IMR-90 (cell line): ENCODE measurements at regions of chr10 and their contacts with region 1.

Region 1: GRCh38 chr10:93376372-93377293 is 105.5 kb downstream of the MYOF start:
- DNase-seq: peak; percentile 90
- ATAC-seq: peak; percentile 77
- H3K4me3 ChIP-seq: no peak overlapping the region
- H3K27ac ChIP-seq: peak overlapping the region; percentile 86
- H3K4me1 ChIP-seq: peaks cover 14% of the 10 kb centered on the region
- H3K27me3 ChIP-seq: no peaks in the 10 kb centered on the region
- CTCF ChIP-seq: peak; percentile 94
- POLR2A ChIP-seq: peak; percentile 66; the same call in 1 of the 2 replicates
- RAD21 ChIP-seq: peak; percentile 97

Region 2: GRCh38 chr10:92848441-92849233 is 528.0 kb before region 1 on chr10 and contains the start of gene EXOC6:
- CTCF ChIA-PET with region 1: no interaction called
- POLR2A ChIA-PET with region 1: no interaction called
- dilution Hi-C with region 1: no loop called
- in situ Hi-C with region 1: no loop called
- intact Hi-C with region 1: no loop called
- DNase-seq: peak; percentile 74
- ATAC-seq: peak; percentile 87
- H3K4me3 ChIP-seq: peak within 1 kb of the TSS; percentile 94
- H3K27ac ChIP-seq: peak within 1 kb of the TSS; percentile 81
- H3K4me1 ChIP-seq: peaks cover 2% of the 10 kb centered on the region; the same call in 1 of the 2 replicates
- H3K27me3 ChIP-seq: no peaks in the 10 kb centered on the region
- CTCF ChIP-seq: no peak
- POLR2A ChIP-seq: peak; percentile 45; the same call in 1 of the 2 replicates
- RAD21 ChIP-seq: no peak
- total RNA-seq, gene EXOC6: 11.5 and 29.2 TPM in 2 replicates

Region 3: DNA sequence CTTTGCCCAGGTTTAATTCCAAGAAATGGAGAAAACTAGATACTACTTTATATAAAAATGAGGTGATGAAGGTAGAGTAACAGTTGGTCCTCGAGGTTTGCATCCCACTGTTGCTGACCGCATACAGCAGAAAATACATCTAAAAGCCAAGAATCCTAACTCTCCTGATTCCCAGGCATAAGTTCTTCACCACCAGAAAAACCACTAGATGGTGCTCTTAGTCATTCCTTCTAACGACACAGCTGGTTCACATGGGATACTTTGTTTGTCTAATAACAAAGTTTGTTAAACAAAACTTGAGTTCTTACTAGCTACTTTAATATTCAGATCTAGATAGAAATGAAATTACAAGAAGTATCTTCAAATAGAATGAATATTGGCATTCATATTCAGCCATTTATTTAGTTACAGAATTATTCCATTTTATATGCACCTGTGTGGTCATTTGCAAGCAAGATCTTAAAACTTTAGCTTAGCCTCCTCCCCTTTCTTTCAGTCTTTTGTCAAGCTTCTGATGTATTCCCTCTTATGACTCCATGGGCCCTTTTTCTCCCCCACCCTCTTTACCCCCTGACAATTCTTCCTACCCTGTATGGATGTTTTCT is 370.1 kb before region 1 on chr10:
- CTCF ChIA-PET with region 1: no interaction called
- POLR2A ChIA-PET with region 1: no interaction called
- dilution Hi-C with region 1: no loop called
- in situ Hi-C with region 1: no loop called
- intact Hi-C with region 1: no loop called
- DNase-seq: peak; percentile 75
- ATAC-seq: peak; percentile 85
- H3K4me3 ChIP-seq: no peak overlapping the region
- H3K27ac ChIP-seq: no peak overlapping the region
- H3K4me1 ChIP-seq: peaks cover 2% of the 10 kb centered on the region; the same call in 1 of the 2 replicates
- H3K27me3 ChIP-seq: no peaks in the 10 kb centered on the region
- CTCF ChIP-seq: peak; percentile 71
- POLR2A ChIP-seq: no peak
- RAD21 ChIP-seq: peak; percentile 76

Region 4: GRCh38 chr10:93352638-93353383 is 23.8 kb before region 1 on chr10:
- CTCF ChIA-PET with region 1: interaction called, 10 read pairs
- POLR2A ChIA-PET with region 1: no interaction called
- dilution Hi-C with region 1: no loop called
- in situ Hi-C with region 1: no loop called
- intact Hi-C with region 1: no loop called
- DNase-seq: peak; percentile 52
- ATAC-seq: peak; percentile 63
- H3K4me3 ChIP-seq: no peak overlapping the region
- H3K27ac ChIP-seq: no peak overlapping the region
- H3K4me1 ChIP-seq: 0 out of 2 replicates have a peak, but pooled peaks cover 1% of the 10 kb centered on the region
- H3K27me3 ChIP-seq: no peaks in the 10 kb centered on the region
- CTCF ChIP-seq: peak; percentile 60
- POLR2A ChIP-seq: no peak
- RAD21 ChIP-seq: 0 out of 2 replicates have a peak, but pooled peaks have one; percentile 21

Region 5: DNA sequence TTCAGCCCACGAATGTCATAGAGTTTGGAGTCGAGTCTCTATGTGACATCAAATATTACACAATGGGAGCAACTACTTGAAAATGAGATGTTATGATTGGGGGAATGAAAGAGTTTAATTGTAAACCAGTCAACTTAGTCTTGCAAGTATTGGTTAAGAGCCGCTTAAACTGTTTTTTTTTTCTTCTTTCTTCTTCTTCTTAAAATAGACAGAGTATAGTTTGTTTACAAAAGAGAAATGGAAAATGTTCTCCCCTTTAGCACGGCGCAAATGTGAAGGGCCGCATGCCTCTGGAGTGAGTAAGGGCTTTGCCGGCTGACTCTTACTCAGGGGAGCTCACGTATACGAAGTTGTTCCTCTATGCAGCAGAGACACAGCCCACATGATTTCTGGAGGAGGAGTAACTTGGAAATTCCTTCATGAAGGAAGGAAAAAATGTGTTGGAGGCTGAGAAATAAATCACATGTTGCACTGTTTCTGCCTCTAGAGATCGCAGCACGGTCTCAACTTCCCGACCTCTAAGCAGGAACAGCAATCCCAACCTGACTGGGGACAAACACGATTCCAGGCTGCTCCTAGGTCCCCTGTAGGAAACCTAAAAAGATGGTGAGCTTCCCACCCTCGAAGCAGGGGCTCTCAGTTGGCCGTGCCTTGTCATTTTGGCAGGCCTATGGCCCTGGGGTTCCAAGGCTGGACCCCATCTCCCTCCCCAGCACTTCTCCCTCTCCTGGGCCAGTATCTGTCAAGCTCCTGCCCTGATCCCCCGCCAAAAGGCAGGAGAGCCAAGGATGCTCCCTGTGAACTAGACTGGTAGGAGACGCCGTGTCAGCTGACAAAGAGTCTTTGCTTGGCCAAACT is 60.7 kb after region 1 on chr10:
- CTCF ChIA-PET with region 1: no interaction called
- POLR2A ChIA-PET with region 1: interaction called, 3 read pairs
- dilution Hi-C with region 1: no loop called
- in situ Hi-C with region 1: no loop called
- intact Hi-C with region 1: loop called (anchors 2 kb)
- DNase-seq: peak; percentile 99
- ATAC-seq: peak; percentile 91
- H3K4me3 ChIP-seq: no peak overlapping the region
- H3K27ac ChIP-seq: peak overlapping the region; percentile 91
- H3K4me1 ChIP-seq: peaks cover 35% of the 10 kb centered on the region
- H3K27me3 ChIP-seq: no peaks in the 10 kb centered on the region
- CTCF ChIP-seq: no peak; the same call in 1 of the 2 replicates
- POLR2A ChIP-seq: peak; percentile 35
- RAD21 ChIP-seq: peak; percentile 4; the same call in 1 of the 2 replicates

Region 6: DNA sequence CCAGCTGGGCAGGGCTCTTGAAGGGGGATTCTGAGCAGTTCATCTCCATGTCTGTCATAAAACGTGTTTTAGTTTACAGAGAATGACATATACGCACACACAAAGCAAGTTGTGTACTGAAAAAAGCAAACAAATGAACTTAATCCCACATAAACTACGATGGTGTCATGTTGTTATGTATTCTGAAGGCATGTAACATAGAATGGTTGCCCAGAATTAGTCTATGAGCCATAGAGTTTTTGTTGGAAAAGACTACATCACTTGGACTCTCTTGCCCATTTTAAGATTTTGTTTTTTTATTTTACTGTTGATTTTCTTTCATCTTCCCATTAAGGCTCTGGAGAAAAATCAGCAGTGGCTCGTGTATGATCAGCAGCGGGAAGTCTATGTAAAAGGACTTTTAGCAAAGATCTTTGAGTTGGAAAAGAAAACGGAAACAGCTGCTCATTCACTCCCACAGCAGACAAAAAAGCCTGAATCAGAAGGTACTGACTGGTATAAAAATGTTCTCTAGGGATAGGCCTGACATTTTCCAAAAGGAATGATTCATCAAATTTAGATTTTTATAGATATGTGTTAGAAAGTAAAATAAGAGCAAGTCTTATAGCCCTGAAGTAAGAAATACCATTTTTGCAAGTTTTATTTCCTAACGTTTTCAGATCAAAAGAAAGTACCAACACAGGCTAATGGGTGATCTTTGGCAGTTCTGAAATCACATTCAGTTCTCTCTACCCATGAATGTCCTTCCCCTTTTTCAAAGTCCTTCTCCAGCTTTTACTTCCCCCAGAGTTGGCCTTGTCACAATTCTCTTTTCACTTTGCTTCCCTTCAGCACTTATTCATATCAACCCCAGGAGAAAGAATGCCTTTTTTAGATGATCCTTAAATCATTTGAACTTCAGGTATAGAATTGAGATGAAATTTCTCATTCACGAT is 138.7 kb after region 1 on chr10:
- CTCF ChIA-PET with region 1: interaction called, 3 read pairs
- POLR2A ChIA-PET with region 1: no interaction called
- dilution Hi-C with region 1: no loop called
- in situ Hi-C with region 1: no loop called
- intact Hi-C with region 1: loop called (anchors 1 kb)
- DNase-seq: no peak
- ATAC-seq: no peak
- H3K4me3 ChIP-seq: no peak overlapping the region
- H3K27ac ChIP-seq: no peak overlapping the region
- H3K4me1 ChIP-seq: peaks cover 5% of the 10 kb centered on the region
- H3K27me3 ChIP-seq: no peaks in the 10 kb centered on the region
- CTCF ChIP-seq: no peak
- POLR2A ChIP-seq: no peak
- RAD21 ChIP-seq: no peak

Region 7: DNA sequence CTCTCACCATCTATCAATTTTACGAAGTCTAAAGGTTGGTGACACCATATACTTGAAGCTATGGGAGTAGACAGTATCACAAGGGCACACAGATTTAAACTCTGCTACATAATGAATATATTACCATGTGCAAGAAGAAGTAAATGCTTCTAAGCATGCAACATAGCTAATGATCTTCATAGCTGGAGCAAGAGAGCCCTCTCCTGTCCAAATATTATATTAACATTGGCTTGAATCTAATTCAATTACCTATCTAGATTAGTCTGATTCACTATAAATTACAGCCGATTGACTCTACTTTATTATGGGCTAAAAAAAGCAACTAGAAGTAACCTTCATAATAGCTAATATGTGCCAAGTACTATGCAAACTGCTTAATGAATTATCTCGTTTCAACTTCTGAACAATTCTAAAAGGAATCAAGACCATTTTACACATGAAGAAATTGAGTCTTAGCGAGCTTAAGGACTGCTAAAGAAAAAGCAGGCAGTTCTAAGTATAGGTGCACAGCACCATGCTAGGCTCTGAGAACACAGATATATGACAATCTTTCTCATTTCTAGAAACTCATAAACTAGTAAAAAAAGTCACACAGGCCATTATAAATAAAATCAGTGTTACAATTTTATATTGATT is 303.9 kb after region 1 on chr10:
- CTCF ChIA-PET with region 1: no interaction called
- POLR2A ChIA-PET with region 1: no interaction called
- dilution Hi-C with region 1: no loop called
- in situ Hi-C with region 1: loop called (anchors 25 kb)
- intact Hi-C with region 1: loop called (anchors 10 kb)
- DNase-seq: peak; percentile 37
- ATAC-seq: peak; percentile 79
- H3K4me3 ChIP-seq: no peak overlapping the region
- H3K27ac ChIP-seq: no peak overlapping the region
- H3K4me1 ChIP-seq: no peaks in the 10 kb centered on the region
- H3K27me3 ChIP-seq: no peaks in the 10 kb centered on the region
- CTCF ChIP-seq: peak; percentile 57
- POLR2A ChIP-seq: no peak
- RAD21 ChIP-seq: peak; percentile 77